Right cardiac atrium (tissue), 5 donors: ENCODE measurements at regions of chr3 and their contacts with region 1.

Region 1: GRCh38 chr3:119676771-119677640 is at the start of gene COX17:
- DNase-seq: peak; percentile 95 to 97 (median 96)
- ATAC-seq: peak; percentile 93 to 94
- H3K4me3 ChIP-seq: peak within 1 kb of the TSS; percentile 69
- H3K27ac ChIP-seq: peak within 1 kb of the TSS; percentile 100
- H3K4me1 ChIP-seq: peaks cover 3% of the 10 kb centered on the region
- H3K27me3 ChIP-seq: no peaks in the 10 kb centered on the region
- total RNA-seq, gene COX17: 108 to 138 (median 132) TPM

Region 2: GRCh38 chr3:119279101-119279554 is 397.9 kb before region 1 on chr3:
- intact Hi-C with region 1: loop called in 1 of 4 experiments (anchors 10 kb)
- DNase-seq: peak; percentile 68 to 86 (median 83)
- ATAC-seq: peak; percentile 91 to 96
- H3K4me3 ChIP-seq: no peak overlapping the region
- H3K27ac ChIP-seq: peak overlapping the region; percentile 94
- H3K4me1 ChIP-seq: peaks cover 4% of the 10 kb centered on the region
- H3K27me3 ChIP-seq: no peaks in the 10 kb centered on the region

Region 3: GRCh38 chr3:119524931-119525662 is 151.9 kb before region 1 on chr3:
- intact Hi-C with region 1: loop called in 2 of 4 experiments (anchors 10 kb)
- DNase-seq: no peak
- ATAC-seq: peak; percentile 19 to 29
- H3K4me3 ChIP-seq: no peak overlapping the region
- H3K27ac ChIP-seq: no peak overlapping the region
- H3K4me1 ChIP-seq: no peaks in the 10 kb centered on the region
- H3K27me3 ChIP-seq: no peaks in the 10 kb centered on the region

Region 4: GRCh38 chr3:119600732-119601131 is 76.3 kb before region 1 on chr3:
- intact Hi-C with region 1: loop called in 2 of 4 experiments (anchors 10 kb)
- DNase-seq: peak; percentile 33 to 82 (median 78)
- ATAC-seq: peak; percentile 77 to 78
- H3K4me3 ChIP-seq: no peak overlapping the region
- H3K27ac ChIP-seq: peak overlapping the region; percentile 23
- H3K4me1 ChIP-seq: peaks cover 21% of the 10 kb centered on the region
- H3K27me3 ChIP-seq: no peaks in the 10 kb centered on the region